Common myeloid progenitor, CD34-positive (primary cell): ENCODE measurements at regions of chr3 and their contacts with region 1.

Region 1: DNA sequence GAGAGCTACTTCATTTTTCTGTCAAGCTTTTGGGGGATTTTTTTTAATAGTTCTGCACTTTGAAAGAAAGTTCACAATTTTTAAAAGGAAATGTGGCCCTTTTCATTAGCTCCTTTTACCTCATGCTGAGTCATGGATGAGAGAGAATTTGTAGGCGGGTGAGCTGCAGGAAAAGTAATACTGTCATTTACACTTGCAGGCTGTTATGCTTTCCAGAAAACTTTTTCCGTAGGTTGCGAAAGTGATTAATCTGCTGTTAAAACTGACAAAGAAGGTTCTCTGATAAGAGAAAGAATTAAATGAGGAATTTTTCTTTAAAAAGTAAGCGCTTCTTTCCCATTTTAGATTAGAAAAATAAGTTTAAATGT is 430.2 kb downstream of the LPP start:
- DNase-seq: peak; percentile 31 to 86 (median 79)
- H3K4me3 ChIP-seq: peak overlapping the region in 6 of 7 experiments; percentile 12 to 50 (median 22)
- H3K27ac ChIP-seq: peak overlapping the region in 1 of 2 experiments; percentile 65
- H3K4me1 ChIP-seq: peaks cover 14 to 32% (median 27%) of the 10 kb centered on the region in 4 experiments
- H3K27me3 ChIP-seq: no peaks in the 10 kb centered on the region

Region 2: DNA sequence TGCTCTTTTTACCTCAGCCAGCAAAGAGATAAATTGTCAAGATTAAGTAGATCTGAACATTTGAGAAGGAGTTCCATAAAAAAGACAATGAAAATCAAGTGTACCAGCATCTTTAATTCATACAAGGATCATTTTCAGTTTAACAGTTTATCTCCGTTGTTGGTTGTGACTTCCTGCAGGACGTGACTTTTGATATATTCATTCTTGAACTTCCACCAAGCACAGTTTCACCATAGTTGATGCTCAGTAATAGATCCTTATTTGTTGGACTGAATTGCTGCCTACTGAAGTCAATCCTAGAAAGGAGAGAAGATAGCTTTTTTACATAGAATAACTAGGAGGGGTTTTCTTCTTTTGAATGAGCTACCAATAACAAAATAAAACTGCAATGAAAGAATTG is 22.0 kb before region 1 on chr3:
- CTCF ChIA-PET with region 1: no interaction called
- POLR2A ChIA-PET with region 1: no interaction called
- DNase-seq: peak in 2 of 3 donors; percentile 31 to 53
- H3K4me3 ChIP-seq: no peak overlapping the region
- H3K27ac ChIP-seq: no peak overlapping the region
- H3K4me1 ChIP-seq: peaks cover 5 to 15% (median 11%) of the 10 kb centered on the region in 4 experiments
- H3K27me3 ChIP-seq: no peaks in the 10 kb centered on the region

Region 3: GRCh38 chr3:188573291-188573940 is 10.7 kb before region 1 on chr3:
- CTCF ChIA-PET with region 1: interaction called, 11 read pairs
- POLR2A ChIA-PET with region 1: interaction called, 3 read pairs
- DNase-seq: no peak
- H3K4me3 ChIP-seq: no peak overlapping the region
- H3K27ac ChIP-seq: no peak overlapping the region
- H3K4me1 ChIP-seq: peaks cover 0 to 17% (median under 1%) of the 10 kb centered on the region in 4 experiments
- H3K27me3 ChIP-seq: no peaks in the 10 kb centered on the region